Right ventricle myocardium inferior (tissue), 1 donor: ENCODE measurements at regions of chrX and their contacts with region 1.

Region 1: DNA sequence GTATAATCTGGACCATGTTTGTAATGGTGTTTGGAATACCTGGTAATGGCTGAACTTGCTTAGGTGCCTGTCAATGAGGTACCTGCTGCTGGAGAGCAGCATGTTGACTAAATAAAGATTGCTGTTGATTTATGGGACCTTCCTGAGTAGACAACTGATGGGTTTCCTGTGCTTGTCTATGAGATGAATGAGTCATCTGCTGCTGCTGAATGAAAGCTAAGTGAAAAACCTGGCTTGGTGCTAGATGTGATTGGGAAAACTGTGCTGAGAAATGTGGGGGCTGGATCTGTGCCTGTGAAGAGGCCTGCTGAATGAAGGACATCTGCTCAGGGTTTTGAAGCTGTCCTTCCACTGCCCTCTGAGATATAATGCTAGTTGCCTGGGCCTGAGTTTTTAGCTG is 69.6 kb downstream of the WNK3 start:
- DNase-seq: no peak
- ATAC-seq: no peak

Region 2: GRCh38 chrX:54675762-54676161 is 387.5 kb after region 1 on chrX:
- intact Hi-C with region 1: loop called (anchors 10 kb)
- DNase-seq: no peak
- ATAC-seq: no peak

Region 3: DNA sequence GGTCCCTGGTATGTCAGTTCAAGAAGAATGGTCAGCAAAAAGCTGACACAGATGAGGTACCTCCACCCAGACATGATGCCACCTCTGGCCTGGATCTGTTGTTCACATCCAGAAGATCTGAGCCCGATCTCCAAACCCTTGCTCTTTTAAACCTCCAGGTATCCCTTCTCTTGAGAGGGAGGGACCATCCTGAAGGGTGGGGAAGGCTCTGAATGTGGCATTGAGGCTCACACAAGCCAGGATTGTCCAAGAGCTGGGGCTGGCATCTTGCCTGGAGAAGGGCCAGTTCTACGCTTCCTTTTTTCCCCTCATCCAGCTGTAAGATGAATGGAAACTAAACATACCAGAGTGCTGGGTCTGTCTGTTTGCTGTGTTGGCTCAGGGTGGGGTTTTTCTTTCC is 509.9 kb after region 1 on chrX and contains the start of gene ITIH6:
- intact Hi-C with region 1: no loop called
- DNase-seq: no peak
- ATAC-seq: no peak
- total RNA-seq, gene ITIH6: not detected